ENCODE measurements at regions of chr20 and their contacts with region 1.

Region 1: GRCh38 chr20:50460460-50461267 is 49.5 kb upstream of the PTPN1 start:
- DNase-seq: no peak
- H3K4me3 ChIP-seq: no peak overlapping the region
- CTCF ChIP-seq: peak; percentile 90

Region 2: DNA sequence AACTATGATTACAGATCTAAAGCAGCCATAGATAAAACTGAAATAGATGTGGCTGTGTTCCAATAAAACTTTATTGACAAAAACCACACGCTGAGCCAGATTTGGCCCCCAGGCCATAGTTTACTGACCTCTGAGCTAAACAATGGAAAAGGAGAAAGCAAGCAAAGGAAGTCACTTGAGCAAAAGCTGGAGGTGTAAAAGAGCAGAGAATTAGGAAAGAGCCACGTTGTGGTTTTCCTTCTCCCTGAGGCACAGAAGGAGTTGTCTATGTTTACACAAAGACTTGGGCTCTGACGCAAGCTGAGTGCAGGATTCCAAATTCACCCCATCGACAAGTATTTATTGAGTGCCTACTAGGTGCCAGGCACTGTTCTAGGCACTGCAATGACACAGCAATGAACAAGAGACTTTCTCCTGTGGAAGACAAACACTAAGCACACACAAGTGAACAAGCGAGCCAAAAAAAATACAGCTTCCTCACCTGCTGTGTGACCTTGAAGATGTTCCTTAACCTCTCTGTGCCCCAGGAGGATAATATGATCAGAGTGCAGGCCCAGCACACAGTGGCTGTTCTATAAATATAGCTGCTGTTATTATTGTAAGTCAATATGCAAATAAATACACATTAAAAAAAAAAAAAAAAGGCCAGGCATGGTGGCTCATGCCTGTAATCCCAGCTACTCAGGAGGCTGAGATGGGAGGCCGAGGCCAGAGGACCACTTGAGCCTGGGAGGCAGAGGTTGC is 25.8 kb before region 1 on chr20:
- CTCF ChIA-PET with region 1: no interaction called
- POLR2A ChIA-PET with region 1: no interaction called
- DNase-seq: no peak
- H3K4me3 ChIP-seq: no peak overlapping the region
- CTCF ChIP-seq: no peak

Region 3: DNA sequence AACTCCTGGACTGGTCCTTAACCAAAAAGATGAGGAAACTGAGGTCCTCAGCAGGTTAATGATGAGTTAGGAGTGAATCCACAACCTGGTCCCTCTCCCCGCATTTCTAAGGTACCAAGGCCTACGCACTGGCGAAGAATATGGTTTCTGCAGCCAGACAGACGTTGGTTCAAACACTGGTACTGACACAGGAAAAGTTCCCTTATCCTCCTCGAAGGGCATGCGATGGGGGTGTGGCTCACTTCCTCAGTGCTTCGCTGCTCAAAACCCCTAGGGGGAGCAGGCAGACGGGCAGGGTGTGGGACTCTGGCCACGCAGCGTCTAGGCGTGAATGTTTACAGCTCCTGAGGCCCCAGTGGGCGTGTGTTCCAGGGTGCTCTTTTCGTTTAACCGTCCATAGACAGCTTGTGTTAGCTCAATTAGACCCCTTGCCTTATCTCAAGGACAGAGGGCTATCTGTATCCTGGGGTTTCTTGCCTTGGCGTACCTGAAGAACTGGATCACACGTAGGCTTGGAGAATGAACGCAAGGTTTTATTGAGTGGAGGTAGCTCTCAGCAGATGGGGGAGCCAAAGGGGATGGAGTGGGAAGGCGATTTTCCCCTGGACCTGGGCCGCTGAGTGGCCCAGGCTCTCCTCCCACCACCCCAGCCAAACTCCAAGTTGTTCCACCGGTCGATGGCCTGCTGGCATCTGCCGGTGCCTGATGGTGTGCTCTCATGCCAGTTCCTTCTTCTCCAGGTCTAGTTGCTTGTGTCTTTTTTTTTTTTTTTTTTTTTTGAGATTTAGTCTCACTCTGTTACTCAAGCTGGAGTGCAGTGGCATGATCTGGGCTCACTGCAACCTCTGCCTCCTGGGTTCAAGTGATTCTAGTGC is 17.7 kb after region 1 on chr20:
- CTCF ChIA-PET with region 1: interaction called, 10 read pairs
- POLR2A ChIA-PET with region 1: no interaction called
- DNase-seq: no peak
- H3K4me3 ChIP-seq: no peak overlapping the region
- CTCF ChIP-seq: peak; percentile 84

Region 4: GRCh38 chr20:50488236-50488806 is 27.7 kb after region 1 on chr20:
- CTCF ChIA-PET with region 1: interaction called, 13 read pairs
- POLR2A ChIA-PET with region 1: no interaction called
- DNase-seq: no peak
- H3K4me3 ChIP-seq: no peak overlapping the region
- CTCF ChIP-seq: no peak

Region 5: GRCh38 chr20:50499918-50500317 is 39.3 kb after region 1 on chr20:
- CTCF ChIA-PET with region 1: no interaction called
- POLR2A ChIA-PET with region 1: no interaction called
- DNase-seq: no peak
- H3K4me3 ChIP-seq: no peak overlapping the region
- CTCF ChIP-seq: no peak

Region 6: GRCh38 chr20:50540620-50541605 is 80.2 kb after region 1 on chr20:
- CTCF ChIA-PET with region 1: no interaction called
- POLR2A ChIA-PET with region 1: no interaction called
- DNase-seq: peak; percentile 36
- H3K4me3 ChIP-seq: no peak overlapping the region
- CTCF ChIP-seq: no peak

Measured in AG04449 (cell line).